Adrenal gland (tissue), 19 donors: ENCODE measurements at regions of chr19 and their contacts with region 1.

Region 1: DNA sequence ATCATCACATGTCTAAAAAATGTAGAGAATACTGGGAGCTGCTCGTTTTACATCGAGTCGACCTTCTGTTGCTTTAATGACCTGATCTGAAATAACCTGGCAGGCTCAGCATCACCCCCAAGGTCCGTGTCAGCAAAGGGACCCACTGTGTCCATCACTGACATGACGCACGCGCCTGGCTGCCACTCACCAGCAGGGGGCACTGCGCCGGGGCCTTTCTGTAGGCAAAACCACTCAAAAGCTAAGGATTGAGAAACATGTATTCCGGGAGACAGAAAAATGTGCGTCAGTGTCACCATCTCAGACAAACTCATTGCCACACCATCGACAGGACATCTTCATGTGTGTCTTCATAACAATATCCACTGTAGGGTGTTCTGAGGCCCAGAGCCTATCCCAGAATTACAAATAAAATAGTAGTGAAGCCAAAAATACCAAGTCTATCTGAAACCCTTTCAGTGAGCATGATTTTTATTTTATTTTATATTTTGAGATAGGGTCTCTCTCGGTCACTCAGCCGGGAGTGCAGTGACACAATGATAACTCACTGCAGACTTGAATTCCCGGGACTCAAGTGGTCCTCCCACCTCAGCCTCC is 130.3 kb upstream of the LSM14A start:
- DNase-seq: peak; percentile 62 to 84 (median 71)
- H3K4me3 ChIP-seq: no peak overlapping the region
- H3K27ac ChIP-seq: no peak overlapping the region
- H3K4me1 ChIP-seq: no peaks in the 10 kb centered on the region
- H3K27me3 ChIP-seq: no peaks in the 10 kb centered on the region
- CTCF ChIP-seq: peak; percentile 62 to 84 (median 74)
- POLR2A ChIP-seq: no peak

Region 2: GRCh38 chr19:33921165-33921564 is 120.9 kb before region 1 on chr19:
- intact Hi-C with region 1: no loop called
- DNase-seq: no peak
- H3K4me3 ChIP-seq: no peak overlapping the region
- H3K27ac ChIP-seq: no peak overlapping the region
- H3K4me1 ChIP-seq: no peaks in the 10 kb centered on the region
- H3K27me3 ChIP-seq: no peaks in the 10 kb centered on the region
- CTCF ChIP-seq: no peak
- POLR2A ChIP-seq: no peak

Region 3: DNA sequence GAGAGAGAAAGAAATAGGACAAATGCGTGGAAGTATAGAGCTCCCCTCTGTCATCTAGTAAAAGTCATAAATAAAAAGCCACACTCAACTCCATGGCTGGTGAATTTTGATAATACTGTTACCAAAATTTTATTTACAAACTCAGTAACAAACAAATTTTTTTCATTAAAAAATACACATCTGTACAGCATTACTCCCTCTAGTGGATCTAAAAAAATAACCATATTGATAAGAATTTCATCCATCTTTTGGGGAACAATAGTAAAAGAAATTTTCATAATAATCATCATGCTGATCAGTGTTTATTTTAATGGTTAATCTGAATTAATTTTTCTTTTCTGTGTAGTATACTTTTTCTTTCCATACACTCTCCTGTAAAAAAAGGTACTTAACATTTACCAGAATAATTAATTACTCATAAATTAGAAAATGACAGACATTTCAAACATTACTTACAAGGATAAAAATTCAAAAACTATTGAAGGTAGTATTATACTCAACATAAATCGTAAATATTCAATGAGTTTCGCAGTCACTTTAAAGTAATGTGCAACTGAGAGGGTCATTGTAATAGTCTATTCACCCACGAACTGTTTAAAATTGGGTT is 43.2 kb before region 1 on chr19:
- intact Hi-C with region 1: no loop called
- DNase-seq: no peak
- H3K4me3 ChIP-seq: no peak overlapping the region
- H3K27ac ChIP-seq: no peak overlapping the region
- H3K4me1 ChIP-seq: no peaks in the 10 kb centered on the region
- H3K27me3 ChIP-seq: no peaks in the 10 kb centered on the region
- CTCF ChIP-seq: peak; percentile 24 to 60 (median 41)
- POLR2A ChIP-seq: no peak

Region 4: GRCh38 chr19:34145741-34146202 is 103.7 kb after region 1 on chr19:
- intact Hi-C with region 1: loop called in 1 of 2 experiments (anchors 5 kb)
- DNase-seq: peak in 6 of 7 donors; percentile 24 to 72 (median 49)
- H3K4me3 ChIP-seq: no peak overlapping the region
- H3K27ac ChIP-seq: no peak overlapping the region
- H3K4me1 ChIP-seq: no peaks in the 10 kb centered on the region
- H3K27me3 ChIP-seq: no peaks in the 10 kb centered on the region
- CTCF ChIP-seq: peak; percentile 56 to 83 (median 78)
- POLR2A ChIP-seq: no peak

Region 5: GRCh38 chr19:34260771-34261173 is 218.7 kb after region 1 on chr19:
- intact Hi-C with region 1: no loop called
- DNase-seq: no peak
- H3K4me3 ChIP-seq: no peak overlapping the region
- H3K27ac ChIP-seq: peak overlapping the region in 2 of 5 donors; percentile 11 to 25
- H3K4me1 ChIP-seq: peaks cover 1 to 34% of the 10 kb centered on the region in 2 donors
- H3K27me3 ChIP-seq: no peaks in the 10 kb centered on the region
- CTCF ChIP-seq: no peak
- POLR2A ChIP-seq: no peak